GM10248 (cell line): ENCODE measurements at regions of chr2 and their contacts with region 1.

Region 1: DNA sequence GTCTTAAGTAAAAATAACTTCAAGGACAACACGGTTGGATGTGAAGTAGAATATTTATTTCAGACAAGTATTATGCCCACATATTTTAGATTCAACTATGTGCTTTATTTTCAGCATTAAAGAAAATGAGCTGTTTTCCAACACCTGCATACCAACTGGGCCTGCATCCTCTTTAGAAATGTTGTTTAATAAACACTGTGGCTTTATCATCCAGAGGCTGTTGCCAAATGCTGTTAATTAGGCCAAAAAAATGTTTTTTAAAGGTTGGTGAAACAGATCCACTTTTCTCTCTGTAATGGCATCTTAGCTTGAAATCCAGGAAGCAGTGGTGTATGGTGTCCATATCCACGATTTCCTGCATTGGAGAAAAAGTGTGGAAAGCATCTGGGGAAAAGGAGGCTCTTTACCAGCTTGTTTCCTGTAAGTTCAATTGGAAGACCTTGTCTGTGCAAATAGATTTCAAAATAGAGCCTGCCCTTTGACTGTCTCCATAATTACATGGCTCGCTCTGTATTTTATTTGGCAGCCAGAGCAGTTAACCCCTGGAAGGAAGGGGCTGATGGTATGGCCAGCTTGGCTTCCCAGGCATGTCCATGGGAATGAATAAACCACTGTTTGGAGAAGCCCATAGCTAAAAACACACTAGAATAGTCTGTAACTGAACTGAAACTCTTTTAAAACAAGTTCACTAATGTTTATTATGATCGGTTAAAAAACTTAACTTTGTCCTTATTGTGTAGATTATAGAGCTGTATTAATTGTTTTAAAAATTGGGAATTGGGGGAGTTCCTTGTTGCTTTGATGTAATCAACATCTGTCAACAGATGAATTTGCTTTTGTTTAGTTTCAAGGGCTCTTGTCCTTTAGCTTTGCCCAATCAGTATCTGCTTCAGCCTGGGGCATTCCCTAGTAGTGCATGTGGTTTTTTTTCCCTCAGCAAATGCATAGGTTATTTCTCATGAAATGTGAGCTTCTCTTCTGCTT is 33.0 kb upstream of the DLX1 start:
- DNase-seq: peak; percentile 30
- CTCF ChIP-seq: no peak

Region 2: GRCh38 chr2:172038604-172039003 is 13.7 kb before region 1 on chr2:
- CTCF ChIA-PET with region 1: interaction called, 12 read pairs
- POLR2A ChIA-PET with region 1: no interaction called
- DNase-seq: no peak
- CTCF ChIP-seq: no peak

Region 3: GRCh38 chr2:172179045-172179701 is 126.9 kb after region 1 on chr2:
- CTCF ChIA-PET with region 1: no interaction called
- POLR2A ChIA-PET with region 1: no interaction called
- DNase-seq: no peak
- CTCF ChIP-seq: no peak